ENCODE measurements at regions of chr7 and their contacts with region 1.

Region 1: DNA sequence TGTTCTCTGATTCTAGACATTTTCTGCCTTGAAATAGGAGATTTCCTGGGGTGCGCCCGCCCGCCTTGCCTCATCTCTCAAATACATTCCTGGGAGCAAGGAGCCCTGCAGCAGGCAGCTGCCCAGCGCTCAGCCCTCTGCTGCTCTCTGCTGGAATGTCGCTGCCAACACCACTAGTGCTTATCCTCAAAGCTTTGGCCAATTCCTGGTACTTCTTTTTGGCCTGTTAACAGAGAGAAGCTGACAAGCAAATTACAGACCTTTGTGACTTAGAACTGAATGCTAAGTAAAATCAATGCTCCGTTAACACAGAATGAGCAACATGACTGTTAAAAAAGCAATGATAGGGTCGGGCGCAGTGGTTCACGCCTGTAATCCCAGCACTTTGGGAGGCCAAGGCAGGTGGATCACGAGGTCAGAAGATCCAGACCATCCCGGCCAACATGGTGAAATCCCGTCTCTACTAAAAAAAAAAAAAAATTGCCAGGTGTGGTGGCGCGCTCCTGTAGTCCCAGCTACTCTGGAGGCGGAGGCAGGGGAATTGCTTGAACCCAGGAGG is 41.9 kb upstream of the SYPL1 start:
- DNase-seq: peak; percentile 81
- H3K4me3 ChIP-seq: no peak overlapping the region
- H3K27ac ChIP-seq: no peak overlapping the region
- H3K4me1 ChIP-seq: no peaks in the 10 kb centered on the region
- H3K27me3 ChIP-seq: no peaks in the 10 kb centered on the region
- CTCF ChIP-seq: peak; percentile 88

Region 2: GRCh38 chr7:106056513-106057203 is 97.3 kb before region 1 on chr7:
- intact Hi-C with region 1: loop called (anchors 2 kb)
- DNase-seq: peak; percentile 74
- H3K4me3 ChIP-seq: no peak overlapping the region
- H3K27ac ChIP-seq: no peak overlapping the region
- H3K4me1 ChIP-seq: no peaks in the 10 kb centered on the region
- H3K27me3 ChIP-seq: no peaks in the 10 kb centered on the region
- CTCF ChIP-seq: peak; percentile 88

Region 3: GRCh38 chr7:108135446-108136190 is 1981.6 kb after region 1 on chr7:
- intact Hi-C with region 1: no loop called
- DNase-seq: no peak
- H3K4me3 ChIP-seq: no peak overlapping the region
- H3K27ac ChIP-seq: no peak overlapping the region
- H3K4me1 ChIP-seq: no peaks in the 10 kb centered on the region
- H3K27me3 ChIP-seq: no peaks in the 10 kb centered on the region
- CTCF ChIP-seq: no peak